Activated CD4-positive, alpha-beta memory T cell treated with anti-CD3 and anti-CD28 coated beads, Interleukin-2, amount 10 ng/mL, durations not matched to agents 7 days and 5 days (primary cell): ENCODE measurements at regions of chr22 and their contacts with region 1.

Region 1: DNA sequence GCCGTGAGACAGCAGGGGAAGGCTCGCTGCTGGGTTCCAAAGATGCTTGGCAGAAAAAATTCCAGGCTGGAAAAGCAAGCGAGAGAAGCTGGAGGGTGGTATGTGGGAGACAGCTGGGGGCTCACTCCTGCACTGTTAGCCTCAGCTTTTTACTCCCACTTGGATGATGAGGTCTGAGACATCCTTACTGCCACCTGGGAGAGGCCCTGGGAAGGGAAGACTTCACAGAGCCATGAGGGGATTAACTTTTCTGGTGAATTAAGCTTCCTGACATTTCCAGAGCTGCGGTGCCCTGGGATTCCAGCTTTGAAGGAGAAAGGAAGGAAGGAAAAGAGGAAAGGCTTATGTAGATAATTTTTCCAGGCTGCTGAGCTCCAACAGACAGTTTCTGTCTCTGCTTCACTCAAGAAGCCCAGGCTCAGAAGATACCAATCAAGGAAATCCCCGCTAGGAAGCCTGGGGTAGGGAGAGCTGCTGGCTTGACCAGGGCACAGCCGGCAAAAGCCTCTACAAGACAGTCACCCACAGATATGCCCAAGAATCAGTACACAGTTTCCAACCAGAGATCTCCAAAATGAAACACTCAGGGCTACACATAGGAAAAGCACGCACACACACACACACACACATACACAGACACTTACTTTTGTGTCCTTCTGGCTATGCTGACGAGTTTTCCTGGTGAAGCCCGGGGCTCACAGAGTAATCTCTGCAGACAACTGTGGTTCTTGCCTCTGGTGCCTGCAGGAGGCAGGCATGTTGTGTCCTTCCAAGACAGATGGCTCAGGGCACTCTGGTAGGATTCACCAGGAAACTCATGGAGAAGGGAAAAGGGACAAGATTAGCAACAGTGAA is 907 bp downstream of the MCHR1 start:
- DNase-seq: no peak
- H3K4me3 Mint-ChIP-seq: no peak overlapping the region
- H3K27ac Mint-ChIP-seq: no peak overlapping the region
- H3K4me1 Mint-ChIP-seq: peaks cover 30% of the 10 kb centered on the region
- H3K27me3 Mint-ChIP-seq: peaks cover 17% of the 10 kb centered on the region

Region 2: GRCh38 chr22:40583053-40583741 is 97.0 kb before region 1 on chr22:
- CTCF ChIA-PET with region 1: no interaction called
- POLR2A ChIA-PET with region 1: no interaction called
- DNase-seq: no peak
- H3K4me3 Mint-ChIP-seq: no peak overlapping the region
- H3K27ac Mint-ChIP-seq: peak overlapping the region; percentile 29
- H3K4me1 Mint-ChIP-seq: peaks cover 24% of the 10 kb centered on the region
- H3K27me3 Mint-ChIP-seq: no peaks in the 10 kb centered on the region

Region 3: GRCh38 chr22:40645579-40646197 is 34.5 kb before region 1 on chr22:
- CTCF ChIA-PET with region 1: interaction called, 14 read pairs
- POLR2A ChIA-PET with region 1: interaction called, 6 read pairs
- DNase-seq: no peak
- H3K4me3 Mint-ChIP-seq: no peak overlapping the region
- H3K27ac Mint-ChIP-seq: no peak overlapping the region
- H3K4me1 Mint-ChIP-seq: peaks cover 21% of the 10 kb centered on the region
- H3K27me3 Mint-ChIP-seq: peaks cover 3% of the 10 kb centered on the region

Region 4: DNA sequence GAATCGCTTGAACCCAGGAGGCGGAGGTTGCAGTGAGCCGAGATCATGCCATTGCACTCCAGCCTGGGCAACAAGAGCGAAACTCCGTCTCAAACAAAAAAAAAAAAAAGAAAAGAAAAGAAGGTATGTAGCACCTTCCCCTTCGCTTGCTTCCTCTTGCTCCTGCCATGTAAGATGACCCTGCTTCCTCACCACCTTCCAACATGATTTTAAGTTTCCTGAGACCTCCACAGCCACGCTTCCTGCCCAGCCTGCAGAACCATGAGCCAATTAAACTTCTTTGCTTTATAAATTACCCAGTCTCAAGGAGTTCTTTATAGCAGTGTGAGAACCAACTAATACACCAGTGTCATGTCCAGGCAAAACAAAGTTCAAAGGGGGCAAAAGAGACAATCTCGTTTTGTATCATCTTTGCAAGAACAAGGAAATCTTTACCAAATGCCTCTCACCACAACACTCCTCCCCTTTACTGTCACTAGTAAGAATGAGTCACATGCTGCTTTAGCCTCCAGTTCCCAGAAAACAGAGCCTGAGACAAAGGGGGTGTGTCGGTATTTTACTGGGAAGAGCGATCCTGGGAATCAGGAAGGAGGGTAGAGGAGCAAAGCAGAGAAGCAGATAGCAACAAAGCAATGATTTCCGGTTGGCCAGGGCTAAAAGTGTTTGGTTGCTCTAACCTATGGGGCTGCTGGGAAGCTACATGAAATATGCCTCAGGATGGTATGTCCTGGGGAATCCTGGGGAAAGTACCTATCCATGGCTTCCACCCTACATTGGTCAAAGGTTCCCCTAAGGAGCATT is 11.4 kb before region 1 on chr22:
- CTCF ChIA-PET with region 1: interaction called, 13 read pairs
- POLR2A ChIA-PET with region 1: no interaction called
- DNase-seq: peak; percentile 31
- H3K4me3 Mint-ChIP-seq: peak overlapping the region; percentile 2
- H3K27ac Mint-ChIP-seq: peak overlapping the region; percentile 76
- H3K4me1 Mint-ChIP-seq: peaks cover 24% of the 10 kb centered on the region
- H3K27me3 Mint-ChIP-seq: no peaks in the 10 kb centered on the region

Region 5: DNA sequence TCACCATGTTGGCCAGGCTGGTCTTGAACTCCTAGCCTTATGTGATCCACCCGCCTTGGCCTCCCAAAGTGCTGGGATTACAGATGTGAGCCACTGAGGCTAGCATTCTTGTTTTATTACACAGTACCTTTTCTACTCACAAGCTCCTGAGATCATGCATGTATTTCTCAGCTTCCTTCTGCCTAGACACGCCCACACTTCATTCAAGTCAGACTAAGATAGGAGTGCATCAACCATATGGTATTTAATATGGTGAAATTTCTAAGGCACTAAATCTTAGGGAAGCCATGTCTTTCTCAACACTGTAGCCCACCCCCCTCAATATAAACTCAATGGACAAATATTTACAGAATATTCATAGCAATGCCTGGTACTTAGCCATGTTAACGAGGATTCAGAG is 76.9 kb after region 1 on chr22:
- CTCF ChIA-PET with region 1: interaction called, 88 read pairs
- POLR2A ChIA-PET with region 1: interaction called, 3 read pairs
- DNase-seq: no peak
- H3K4me3 Mint-ChIP-seq: no peak overlapping the region
- H3K27ac Mint-ChIP-seq: no peak overlapping the region
- H3K4me1 Mint-ChIP-seq: no peaks in the 10 kb centered on the region
- H3K27me3 Mint-ChIP-seq: peaks cover under 1% of the 10 kb centered on the region

Region 6: DNA sequence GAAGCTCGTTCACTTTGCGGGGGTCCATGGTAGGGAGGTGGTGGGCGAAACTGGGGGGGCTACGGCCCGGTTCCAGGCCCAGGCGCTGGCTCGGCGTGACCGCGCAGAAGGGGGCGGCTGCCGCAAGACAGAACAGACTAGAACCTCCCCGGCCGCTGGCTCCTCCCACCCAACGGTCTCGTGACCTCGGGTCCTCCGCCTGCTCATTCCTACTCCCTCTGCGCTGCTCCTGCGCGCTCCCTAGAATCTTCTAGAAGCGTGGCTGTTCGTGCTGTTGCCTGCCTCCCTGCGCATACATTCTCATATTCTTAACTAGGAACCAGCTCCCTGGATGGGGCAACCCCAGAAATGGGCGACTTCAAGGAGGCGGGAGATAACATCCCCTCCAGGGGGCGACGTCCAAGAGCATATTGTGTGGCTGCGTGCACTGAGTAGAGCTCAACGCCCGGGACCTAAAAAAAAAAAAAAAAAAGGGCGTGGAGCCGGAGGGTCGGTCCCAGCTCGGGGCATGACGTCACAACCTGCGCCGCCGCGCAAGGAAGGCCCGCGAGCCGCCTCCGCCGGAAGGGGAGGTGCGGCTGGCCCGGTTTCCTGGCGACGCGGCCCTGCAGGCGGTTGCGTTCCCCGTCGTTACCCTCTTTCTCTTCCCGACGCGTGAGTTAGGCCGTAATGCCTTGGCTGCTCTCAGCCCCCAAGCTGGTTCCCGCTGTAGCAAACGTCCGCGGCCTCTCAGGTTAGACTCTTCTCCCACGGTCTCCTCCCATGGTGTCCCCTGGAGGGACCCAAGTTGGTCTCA is 176.5 kb after region 1 on chr22 and contains the starts of genes ST13 and XPNPEP3:
- CTCF ChIA-PET with region 1: interaction called, 11 read pairs
- POLR2A ChIA-PET with region 1: interaction called, 3 read pairs
- DNase-seq: peak; percentile 97
- H3K4me3 Mint-ChIP-seq: peak within 1 kb of the TSS; percentile 95
- H3K27ac Mint-ChIP-seq: peak within 1 kb of the TSS; percentile 99
- H3K4me1 Mint-ChIP-seq: peaks cover 50% of the 10 kb centered on the region
- H3K27me3 Mint-ChIP-seq: no peaks in the 10 kb centered on the region
- total RNA-seq, gene ST13: 138 to 142 TPM
- total RNA-seq, gene XPNPEP3: 11.3 to 13.2 TPM